Activated T-helper 2 cell treated with anti-CD3 and anti-CD28 coated beads, Interferon-gamma antibody, Interleukin-2, Interleukin-4, amounts not matched to agents 10 μg/mL and 5 μg/mL and 100 μg/mL, durations not matched to agents 14 hours and 24 hours and 36 hours (primary cell): ENCODE measurements at regions of chr20 and their contacts with region 1.

Region 1: DNA sequence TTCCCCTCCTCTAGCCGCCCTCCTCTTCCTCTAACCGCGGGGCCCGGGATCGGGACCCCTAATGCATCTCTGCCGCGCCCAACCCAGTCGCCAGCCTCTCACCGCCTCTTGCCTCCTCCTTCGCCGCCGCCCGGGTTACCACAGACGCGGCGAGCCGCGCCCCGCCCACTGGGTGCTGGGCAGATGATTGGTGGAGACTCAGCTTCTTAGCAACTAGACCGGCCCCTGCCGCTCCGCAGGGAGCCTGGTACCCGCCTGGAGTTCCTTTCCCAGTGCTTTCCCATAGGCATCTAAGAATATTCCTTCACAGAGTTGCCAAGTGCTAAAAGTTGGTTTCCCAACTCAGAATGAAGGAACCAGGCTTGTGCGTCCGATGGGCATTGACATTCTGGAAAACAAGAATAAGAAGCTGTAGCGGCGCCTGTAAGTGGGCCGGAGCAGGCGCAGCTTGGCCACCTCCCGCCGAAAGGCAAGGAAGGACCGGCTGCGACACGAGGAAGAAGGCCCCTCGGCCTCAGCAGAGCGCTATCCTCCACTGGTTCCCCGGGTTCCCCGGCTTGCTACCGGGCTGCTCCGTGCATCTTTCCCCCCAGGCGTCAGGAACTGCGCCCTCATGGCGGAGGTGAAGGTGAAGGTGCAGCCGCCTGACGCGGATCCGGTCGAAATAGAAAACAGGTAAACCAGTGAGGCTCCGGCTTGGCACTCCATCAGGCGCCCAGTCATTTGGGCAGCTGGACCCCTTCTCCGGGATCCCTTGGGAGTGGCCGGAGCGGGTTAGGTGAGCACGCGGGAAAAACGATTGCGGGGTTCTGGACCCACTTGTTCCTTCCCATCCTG is at the starts of genes DZANK1 and POLR3F:
- DNase-seq: peak; percentile 90
- H3K4me3 Mint-ChIP-seq: peak within 1 kb of the TSS; percentile 97
- H3K27ac Mint-ChIP-seq: peak within 1 kb of the TSS; percentile 88
- H3K4me1 Mint-ChIP-seq: peaks cover 19% of the 10 kb centered on the region
- H3K27me3 Mint-ChIP-seq: no peaks in the 10 kb centered on the region
- total RNA-seq, gene DZANK1: 1.3 TPM in 2 replicates
- total RNA-seq, gene POLR3F: 12.5 and 13.5 TPM in 2 replicates

Region 2: GRCh38 chr20:18188434-18188833 is 278.7 kb before region 1 on chr20:
- intact Hi-C with region 1: no loop called
- DNase-seq: no peak
- H3K4me3 Mint-ChIP-seq: no peak overlapping the region
- H3K27ac Mint-ChIP-seq: no peak overlapping the region
- H3K4me1 Mint-ChIP-seq: peaks cover 6% of the 10 kb centered on the region
- H3K27me3 Mint-ChIP-seq: no peaks in the 10 kb centered on the region

Region 3: GRCh38 chr20:18496740-18497592 is 29.9 kb after region 1 on chr20 and contains the start of gene RBBP9:
- intact Hi-C with region 1: loop called (anchors 1 kb)
- DNase-seq: peak; percentile 69
- H3K4me3 Mint-ChIP-seq: peak within 1 kb of the TSS; percentile 97
- H3K27ac Mint-ChIP-seq: peak within 1 kb of the TSS; percentile 87
- H3K4me1 Mint-ChIP-seq: peaks cover 13% of the 10 kb centered on the region
- H3K27me3 Mint-ChIP-seq: no peaks in the 10 kb centered on the region
- total RNA-seq, gene RBBP9: 21.2 and 23.5 TPM in 2 replicates

Region 4: GRCh38 chr20:18524646-18525045 is 57.5 kb after region 1 on chr20:
- intact Hi-C with region 1: no loop called
- DNase-seq: no peak
- H3K4me3 Mint-ChIP-seq: no peak overlapping the region
- H3K27ac Mint-ChIP-seq: no peak overlapping the region
- H3K4me1 Mint-ChIP-seq: no peaks in the 10 kb centered on the region
- H3K27me3 Mint-ChIP-seq: no peaks in the 10 kb centered on the region

Region 5: GRCh38 chr20:18566892-18567742 is 100.0 kb after region 1 on chr20 and contains the start of gene SMIM26:
- intact Hi-C with region 1: loop called (anchors 1 kb)
- DNase-seq: peak; percentile 91
- H3K4me3 Mint-ChIP-seq: peak within 1 kb of the TSS; percentile 97
- H3K27ac Mint-ChIP-seq: peak within 1 kb of the TSS; percentile 96
- H3K4me1 Mint-ChIP-seq: peaks cover 10% of the 10 kb centered on the region
- H3K27me3 Mint-ChIP-seq: no peaks in the 10 kb centered on the region
- total RNA-seq, gene SMIM26: 55.0 and 60.2 TPM in 2 replicates

Region 6: GRCh38 chr20:18587665-18588573 is 120.8 kb after region 1 on chr20 and contains the start of gene DTD1:
- intact Hi-C with region 1: loop called (anchors 2 kb)
- DNase-seq: peak; percentile 83
- H3K4me3 Mint-ChIP-seq: peak within 1 kb of the TSS; percentile 87
- H3K27ac Mint-ChIP-seq: peak within 1 kb of the TSS; percentile 74
- H3K4me1 Mint-ChIP-seq: peaks cover 20% of the 10 kb centered on the region
- H3K27me3 Mint-ChIP-seq: peaks cover 9% of the 10 kb centered on the region
- total RNA-seq, gene DTD1: 49.9 and 50.3 TPM in 2 replicates